H1 (cell line): ENCODE measurements at regions of chr16 and their contacts with region 1.

Region 1: DNA sequence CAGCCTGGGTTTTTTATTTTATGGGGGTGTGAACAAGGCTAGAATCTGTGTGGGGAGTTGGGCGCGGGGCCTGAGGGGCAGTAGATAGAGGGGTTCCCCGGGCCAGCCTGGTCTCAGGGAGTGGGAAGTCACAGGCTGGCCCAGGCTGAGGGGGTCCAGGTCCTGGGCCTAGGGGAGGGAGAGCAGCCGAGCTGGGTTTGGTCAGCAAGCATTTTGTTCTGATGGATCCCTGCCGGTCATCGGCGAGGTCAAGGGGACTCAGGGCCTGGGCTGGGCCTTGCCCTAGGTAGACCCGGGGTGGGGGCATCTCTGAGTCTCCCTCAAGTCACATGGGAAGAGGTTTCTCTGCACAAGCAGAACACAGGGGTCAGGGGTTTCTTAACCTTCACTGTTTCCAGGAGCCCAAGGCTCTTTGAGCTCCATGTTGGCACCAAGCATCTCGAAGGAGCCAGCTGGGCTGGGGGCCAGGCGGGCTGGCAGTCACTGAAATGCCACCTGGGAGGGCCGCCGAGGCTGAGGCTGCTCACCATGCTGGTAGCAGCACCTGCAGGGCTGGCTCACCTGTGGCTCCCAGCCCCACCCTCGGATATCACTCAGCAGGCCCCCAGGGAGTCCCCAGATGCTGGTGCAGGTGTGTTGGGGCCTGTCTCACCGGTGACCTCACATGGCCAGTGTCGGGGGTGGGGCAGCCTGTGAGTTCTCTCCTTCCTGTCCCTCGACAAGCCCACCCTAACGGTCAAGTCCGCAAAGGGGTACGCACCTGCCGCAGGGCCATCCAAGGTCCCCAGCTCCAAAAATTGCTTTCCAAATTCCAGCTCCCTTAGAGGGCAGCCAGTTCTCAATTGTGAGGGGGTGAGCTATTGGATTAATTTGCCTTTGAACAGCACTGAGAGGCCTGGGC is 41.0 kb downstream of the SLC7A5 start:
- DNase-seq: no peak
- H3K4me3 ChIP-seq: no peak overlapping the region
- H3K27ac ChIP-seq: no peak overlapping the region; the same call in 1 of the 2 replicates
- H3K4me1 ChIP-seq: peaks cover 6 to 47% (median 33%) of the 10 kb centered on the region in 4 experiments
- H3K27me3 ChIP-seq: no peaks in the 10 kb centered on the region
- CTCF ChIP-seq: no peak
- EP300 ChIP-seq: no peak
- POLR2A ChIP-seq: no peak
- RAD21 ChIP-seq: no peak

Region 2: GRCh38 chr16:87806603-87807546 is 21.4 kb before region 1 on chr16:
- CTCF ChIA-PET with region 1: interaction called, 5 read pairs
- POLR2A ChIA-PET with region 1: interaction called, 24 read pairs
- DNase-seq: peak in 1 of 2 experiments; percentile 61
- H3K4me3 ChIP-seq: no peak overlapping the region
- H3K27ac ChIP-seq: no peak overlapping the region
- H3K4me1 ChIP-seq: peaks cover 0 to 14% (median 0%) of the 10 kb centered on the region in 4 experiments; a peak in 2 of 7 replicates
- H3K27me3 ChIP-seq: no peaks in the 10 kb centered on the region
- CTCF ChIP-seq: no peak
- EP300 ChIP-seq: no peak
- POLR2A ChIP-seq: no peak
- RAD21 ChIP-seq: no peak

Region 3: GRCh38 chr16:87812200-87812656 is 16.1 kb before region 1 on chr16:
- CTCF ChIA-PET with region 1: interaction called, 11 read pairs
- POLR2A ChIA-PET with region 1: interaction called, 24 read pairs
- DNase-seq: no peak
- H3K4me3 ChIP-seq: no peak overlapping the region
- H3K27ac ChIP-seq: no peak overlapping the region
- H3K4me1 ChIP-seq: peaks cover 0 to 2% (median 0%) of the 10 kb centered on the region in 4 experiments; a peak in 3 of 7 replicates
- H3K27me3 ChIP-seq: no peaks in the 10 kb centered on the region
- CTCF ChIP-seq: peak in 2 of 3 experiments; percentile 16 to 25; a peak in 2 of 4 replicates
- EP300 ChIP-seq: no peak
- POLR2A ChIP-seq: no peak
- RAD21 ChIP-seq: peak; percentile 35 to 46

Region 4: DNA sequence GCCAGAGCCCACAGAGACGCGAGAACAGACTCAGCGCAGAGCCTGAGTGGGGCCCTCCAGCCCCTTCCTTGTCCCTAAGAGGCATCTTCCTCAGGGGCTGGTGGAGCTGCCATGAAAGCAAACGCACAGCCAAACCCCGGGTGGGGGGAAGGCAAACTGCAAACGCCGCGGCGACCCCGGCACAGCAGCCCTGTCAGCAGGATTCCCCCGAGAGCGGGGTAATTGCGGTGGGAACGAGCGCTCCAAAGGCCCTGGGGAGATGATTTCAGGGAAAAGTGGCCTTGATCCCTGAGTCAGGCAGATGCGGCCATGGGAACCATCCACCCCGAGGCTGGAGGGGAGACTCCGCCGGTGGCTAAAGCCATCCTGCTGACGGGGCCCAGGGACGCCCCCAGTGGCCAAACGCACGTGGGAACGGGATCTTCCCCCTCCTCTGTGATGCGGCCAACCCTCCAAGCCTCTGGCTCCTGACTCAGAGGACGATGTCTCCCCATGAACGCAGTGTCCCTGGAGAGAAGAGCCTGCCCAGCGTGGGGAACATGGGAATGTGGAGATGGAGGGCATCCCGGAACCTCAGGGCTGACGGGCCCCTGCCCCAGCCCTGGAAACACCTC is 15.9 kb after region 1 on chr16:
- CTCF ChIA-PET with region 1: interaction called, 64 read pairs
- POLR2A ChIA-PET with region 1: interaction called, 33 read pairs
- DNase-seq: peak in 1 of 2 experiments; percentile 75
- H3K4me3 ChIP-seq: no peak overlapping the region
- H3K27ac ChIP-seq: no peak overlapping the region
- H3K4me1 ChIP-seq: peaks cover 0 to 6% (median 0%) of the 10 kb centered on the region in 4 experiments; a peak in 1 of 7 replicates
- H3K27me3 ChIP-seq: no peaks in the 10 kb centered on the region
- CTCF ChIP-seq: peak; percentile 44 to 80 (median 70)
- EP300 ChIP-seq: no peak
- POLR2A ChIP-seq: no peak
- RAD21 ChIP-seq: peak; percentile 37 to 53

Region 5: DNA sequence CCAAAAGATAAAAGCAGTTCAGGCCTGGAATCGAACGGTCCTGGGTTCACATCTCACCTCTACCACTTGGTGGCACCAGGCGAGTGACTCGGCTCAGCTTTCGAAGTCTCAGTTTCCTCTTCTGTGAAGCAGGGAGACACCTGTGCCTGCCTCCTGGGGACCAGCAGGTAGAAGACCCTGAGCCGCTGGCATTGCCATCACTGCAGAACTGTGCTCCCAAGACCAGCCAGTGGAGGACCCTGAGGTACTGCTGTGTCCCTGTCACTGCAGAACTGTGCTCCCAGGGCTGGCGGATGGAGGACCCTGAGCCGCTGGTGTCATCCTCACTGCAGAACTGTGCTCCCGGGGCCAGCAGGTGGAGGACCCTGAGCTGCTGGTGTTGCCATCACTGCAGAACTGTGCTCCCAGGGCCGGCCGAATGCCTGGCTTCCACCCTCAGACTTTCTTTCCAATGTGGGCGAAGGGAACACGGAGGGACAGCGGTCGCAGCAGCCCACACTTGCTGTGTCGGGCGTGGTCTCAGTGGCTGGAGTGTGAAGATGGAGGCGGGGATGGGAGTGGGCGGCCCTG is 49.7 kb after region 1 on chr16:
- CTCF ChIA-PET with region 1: no interaction called
- POLR2A ChIA-PET with region 1: interaction called, 14 read pairs
- DNase-seq: no peak
- H3K4me3 ChIP-seq: no peak overlapping the region
- H3K27ac ChIP-seq: no peak overlapping the region
- H3K4me1 ChIP-seq: peaks cover 3 to 26% (median 13%) of the 10 kb centered on the region in 4 experiments
- H3K27me3 ChIP-seq: no peaks in the 10 kb centered on the region; a peak in 1 of 7 replicates
- CTCF ChIP-seq: peak; percentile 12 to 55 (median 52); a peak in 3 of 4 replicates
- EP300 ChIP-seq: no peak
- POLR2A ChIP-seq: no peak
- RAD21 ChIP-seq: peak; percentile 8 to 40; a peak in 2 of 4 replicates